Mammary epithelial cell (primary cell): ENCODE measurements at regions of chr19 and their contacts with region 1.

Region 1: GRCh38 chr19:16594131-16594586 is 21.9 kb upstream of the SLC35E1 start:
- DNase-seq: no peak
- H3K4me3 ChIP-seq: no peak overlapping the region
- H3K27ac ChIP-seq: no peak overlapping the region
- H3K4me1 ChIP-seq: peaks cover 30% of the 10 kb centered on the region
- H3K27me3 ChIP-seq: no peaks in the 10 kb centered on the region
- CTCF ChIP-seq: no peak

Region 2: GRCh38 chr19:16504271-16504670 is 89.9 kb before region 1 on chr19:
- CTCF ChIA-PET with region 1: no interaction called
- dilution Hi-C with region 1: loop called (anchors 5 kb)
- in situ Hi-C with region 1: no loop called
- intact Hi-C with region 1: no loop called
- DNase-seq: no peak
- H3K4me3 ChIP-seq: no peak overlapping the region
- H3K27ac ChIP-seq: no peak overlapping the region
- H3K4me1 ChIP-seq: peaks cover 11% of the 10 kb centered on the region
- H3K27me3 ChIP-seq: no peaks in the 10 kb centered on the region
- CTCF ChIP-seq: no peak

Region 3: DNA sequence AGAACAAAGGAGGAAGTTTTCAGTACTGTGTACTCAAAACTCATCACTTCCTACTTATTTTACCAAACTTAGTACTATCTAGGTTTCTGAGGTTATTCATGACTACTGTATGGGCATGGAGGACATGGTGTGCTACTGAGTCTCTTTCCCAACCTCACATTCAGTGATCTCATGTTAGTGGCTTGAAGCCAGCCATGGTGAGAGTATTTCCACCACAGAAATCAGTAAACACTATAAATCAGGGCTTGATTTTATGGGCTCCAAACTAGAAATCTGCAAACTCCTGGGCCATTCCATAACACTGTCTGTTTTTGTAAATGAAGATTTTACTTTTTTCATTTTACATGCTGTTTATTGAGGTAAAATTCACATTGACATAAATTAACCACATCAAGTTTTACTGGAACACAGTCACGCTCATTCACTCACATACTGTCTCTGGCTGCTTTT is 14.2 kb after region 1 on chr19:
- CTCF ChIA-PET with region 1: no interaction called
- dilution Hi-C with region 1: no loop called
- in situ Hi-C with region 1: no loop called
- intact Hi-C with region 1: no loop called
- DNase-seq: peak; percentile 64
- H3K4me3 ChIP-seq: no peak overlapping the region
- H3K27ac ChIP-seq: no peak overlapping the region
- H3K4me1 ChIP-seq: peaks cover 18% of the 10 kb centered on the region
- H3K27me3 ChIP-seq: no peaks in the 10 kb centered on the region
- CTCF ChIP-seq: no peak

Region 4: DNA sequence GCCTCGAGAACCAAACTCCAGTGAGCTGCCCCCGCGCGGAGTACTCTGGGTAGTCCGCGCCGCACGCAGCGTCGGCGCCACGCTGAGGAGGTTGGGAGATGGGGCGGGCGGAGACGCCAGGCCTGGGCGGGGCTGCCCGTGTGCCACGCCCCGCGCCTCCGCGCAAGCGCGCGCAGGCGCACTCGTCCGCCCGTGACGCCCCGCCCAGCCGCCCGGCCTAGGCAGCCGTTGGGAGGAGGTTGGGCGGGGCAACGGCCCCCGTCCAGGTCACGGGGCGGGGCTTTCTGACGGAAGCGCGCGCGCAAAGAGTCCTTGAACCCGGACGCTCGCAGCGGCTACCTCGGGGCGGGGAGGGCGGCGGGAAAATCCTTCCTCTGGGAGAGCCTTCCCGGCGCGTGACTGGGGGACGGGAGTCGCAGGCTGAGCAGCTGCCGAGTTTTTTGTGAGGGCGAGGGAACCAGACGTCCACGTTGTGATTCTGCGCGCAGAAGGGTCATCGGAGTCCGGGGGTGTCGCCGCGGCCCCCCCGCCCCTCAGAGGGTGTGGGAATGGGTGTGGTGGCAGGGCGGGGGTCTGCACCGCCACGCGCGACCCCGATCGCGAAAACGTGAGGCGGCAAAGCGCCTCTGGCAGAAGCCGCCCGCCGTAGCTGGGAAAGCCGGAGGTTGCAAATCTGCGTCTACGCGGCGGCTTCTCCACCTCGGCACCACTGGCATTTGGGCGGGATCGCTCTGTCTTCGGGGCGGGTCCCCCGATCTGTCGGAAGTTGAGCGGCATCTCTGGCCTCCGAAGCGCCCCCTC is 34.2 kb after region 1 on chr19 and contains the start of gene MED26:
- CTCF ChIA-PET with region 1: no interaction called
- dilution Hi-C with region 1: loop called (anchors 5 kb)
- in situ Hi-C with region 1: no loop called
- intact Hi-C with region 1: no loop called
- DNase-seq: peak; percentile 91
- H3K4me3 ChIP-seq: peak within 1 kb of the TSS; percentile 80 to 93 (median 83)
- H3K27ac ChIP-seq: peak within 1 kb of the TSS; percentile 80
- H3K4me1 ChIP-seq: peaks cover 13% of the 10 kb centered on the region
- H3K27me3 ChIP-seq: no peaks in the 10 kb centered on the region
- CTCF ChIP-seq: peak in 1 of 2 donors; percentile 22
- total RNA-seq, gene MED26: 8.8 to 10.9 TPM

Region 5: GRCh38 chr19:16671652-16672274 is 77.6 kb after region 1 on chr19:
- CTCF ChIA-PET with region 1: no interaction called
- dilution Hi-C with region 1: loop called (anchors 5 kb)
- in situ Hi-C with region 1: no loop called
- intact Hi-C with region 1: no loop called
- DNase-seq: no peak
- H3K4me3 ChIP-seq: no peak overlapping the region
- H3K27ac ChIP-seq: no peak overlapping the region
- H3K4me1 ChIP-seq: no peaks in the 10 kb centered on the region
- H3K27me3 ChIP-seq: no peaks in the 10 kb centered on the region
- CTCF ChIP-seq: no peak